GM10248 (cell line): ENCODE measurements at regions of chr18 and their contacts with region 1.

Region 1: GRCh38 chr18:21571772-21572171 is 28.7 kb downstream of the ESCO1 start:
- DNase-seq: no peak
- CTCF ChIP-seq: no peak

Region 2: DNA sequence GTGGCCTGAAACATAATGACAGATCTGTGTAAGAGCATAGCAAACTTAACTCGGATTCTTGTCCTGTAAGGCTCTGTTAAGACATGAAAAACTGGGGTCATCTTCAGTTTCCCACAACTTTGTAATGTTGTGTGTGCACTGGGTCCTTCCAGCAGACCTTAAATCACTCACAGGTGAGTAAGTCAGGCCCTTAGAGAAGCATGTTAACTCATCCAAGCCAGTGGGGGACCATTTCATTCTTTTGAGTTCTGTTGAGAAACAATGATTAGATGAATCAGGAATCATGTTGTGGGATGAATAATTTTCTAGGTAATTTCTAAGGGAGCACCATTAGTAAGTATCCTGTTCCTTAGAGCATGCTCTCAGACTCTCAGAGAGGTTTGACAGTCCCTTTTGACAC is 138.3 kb before region 1 on chr18:
- CTCF ChIA-PET with region 1: no interaction called
- POLR2A ChIA-PET with region 1: no interaction called
- DNase-seq: no peak
- CTCF ChIP-seq: no peak

Region 3: GRCh38 chr18:21559195-21559594 is 12.6 kb before region 1 on chr18:
- CTCF ChIA-PET with region 1: interaction called, 10 read pairs
- POLR2A ChIA-PET with region 1: no interaction called
- DNase-seq: no peak
- CTCF ChIP-seq: no peak

Region 4: DNA sequence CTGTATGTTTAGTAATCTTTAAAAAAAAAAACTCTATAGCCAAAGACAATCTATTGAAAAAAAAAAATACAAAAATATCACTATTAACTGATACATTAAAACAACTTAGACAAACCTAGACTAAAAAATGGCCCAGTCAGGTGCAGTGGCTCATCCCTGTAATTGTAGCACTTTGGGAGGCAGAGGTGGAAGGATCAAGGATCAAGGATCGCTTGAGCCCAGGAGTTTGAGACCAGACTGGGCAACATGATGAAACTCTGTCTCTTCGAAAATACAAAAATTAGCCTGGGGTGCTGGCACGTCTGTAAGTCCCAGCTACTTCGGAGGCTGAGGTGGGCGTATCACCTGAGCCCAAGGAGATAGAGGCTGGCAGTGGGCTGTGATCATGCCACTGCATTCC is 12.6 kb after region 1 on chr18:
- CTCF ChIA-PET with region 1: no interaction called
- POLR2A ChIA-PET with region 1: no interaction called
- DNase-seq: no peak
- CTCF ChIP-seq: no peak